Mammary epithelial cell (primary cell): ENCODE measurements at regions of chr7 and their contacts with region 1.

Region 1: DNA sequence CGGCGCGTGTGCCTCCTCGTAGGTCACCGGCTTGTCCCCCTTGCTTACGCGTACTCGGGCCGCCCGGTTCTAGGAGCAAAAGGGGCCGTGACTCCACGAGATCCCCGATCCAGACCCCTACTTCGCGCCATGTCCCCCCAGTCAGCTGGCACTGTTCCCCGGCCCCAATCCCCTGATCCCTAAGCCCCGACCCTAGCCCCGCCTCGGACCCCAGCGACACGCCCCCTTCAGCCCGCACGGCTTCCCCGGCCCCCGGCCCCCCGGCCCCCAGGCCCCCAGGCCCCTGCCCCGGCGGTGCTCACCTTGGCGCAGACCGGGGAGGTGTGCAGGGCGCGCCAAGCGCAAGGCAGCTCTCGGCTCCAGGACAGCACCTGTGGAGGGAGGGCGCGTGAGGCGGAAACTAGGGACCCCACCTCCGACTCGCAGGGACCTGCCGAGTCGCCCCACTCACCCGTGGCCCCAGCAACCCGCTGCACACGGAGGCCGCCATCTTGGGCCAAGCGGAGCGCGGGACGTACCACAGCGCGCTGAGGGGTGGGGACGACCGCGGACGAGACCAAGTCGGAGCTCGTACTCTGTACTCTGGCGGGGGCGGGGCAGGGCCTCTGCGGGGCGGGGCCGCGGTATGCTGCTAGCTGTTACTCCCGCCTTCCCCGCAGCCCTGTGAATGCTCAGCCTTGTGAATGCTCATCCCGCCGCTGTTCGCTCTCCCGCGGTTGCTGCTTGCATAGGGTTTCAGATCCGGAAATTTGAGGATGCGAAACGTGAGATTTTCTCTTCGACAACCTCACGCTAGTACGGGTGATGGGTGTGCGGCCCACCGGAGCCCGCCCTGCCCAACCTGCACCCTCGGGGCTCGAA is at the start of gene MRPS24:
- DNase-seq: peak; percentile 90
- H3K4me3 ChIP-seq: peak within 1 kb of the TSS; percentile 64 to 99 (median 79)
- H3K27ac ChIP-seq: peak within 1 kb of the TSS; percentile 97
- H3K4me1 ChIP-seq: peaks cover 42% of the 10 kb centered on the region
- H3K27me3 ChIP-seq: no peaks in the 10 kb centered on the region
- CTCF ChIP-seq: no peak
- total RNA-seq, gene MRPS24: 49.0 to 114 TPM

Region 2: DNA sequence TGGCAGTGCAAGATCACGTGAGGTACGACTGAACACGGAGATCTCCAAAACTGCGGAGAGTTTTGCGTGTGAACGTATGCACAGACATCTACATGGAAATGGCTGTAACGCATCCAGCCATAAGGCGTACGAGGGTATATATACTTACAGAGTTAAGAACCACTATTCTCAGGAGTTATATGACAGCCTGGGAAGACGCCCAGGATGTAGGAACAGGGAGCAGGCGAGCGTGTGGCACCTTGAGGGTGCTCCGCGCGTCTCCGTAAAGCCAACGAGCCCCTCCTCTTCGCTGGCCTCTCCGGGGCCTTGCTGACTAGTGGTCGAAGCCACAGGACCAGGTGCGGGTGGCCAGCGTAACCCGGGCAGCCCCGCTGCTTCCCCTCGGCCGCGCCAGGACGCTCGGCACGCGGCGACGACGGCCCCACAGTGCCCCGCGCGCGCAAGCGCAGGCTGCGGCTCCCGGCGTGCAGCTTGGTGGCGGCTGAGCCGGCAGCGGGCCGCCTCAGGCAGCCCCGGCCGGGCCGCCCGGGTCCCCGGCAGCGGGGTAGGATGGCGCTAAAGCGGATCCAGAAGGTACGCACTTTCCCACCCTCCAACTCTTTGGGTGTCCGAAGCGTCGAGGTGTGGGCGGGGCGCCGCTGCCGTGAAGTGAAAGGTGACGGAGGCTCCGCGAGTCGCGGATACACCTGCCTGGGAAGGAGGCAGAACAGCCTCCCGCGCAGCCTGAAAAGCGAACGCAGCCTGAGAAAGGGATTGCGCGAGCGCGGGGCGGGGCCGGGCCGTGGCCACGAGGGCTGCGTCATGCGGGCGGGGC is 57.0 kb after region 1 on chr7 and contains the start of gene UBE2D4:
- CTCF ChIA-PET with region 1: no interaction called
- dilution Hi-C with region 1: no loop called
- in situ Hi-C with region 1: no loop called
- intact Hi-C with region 1: loop called (anchors 2 kb)
- DNase-seq: peak; percentile 83
- H3K4me3 ChIP-seq: peak within 1 kb of the TSS; percentile 62 to 73 (median 70)
- H3K27ac ChIP-seq: no peak within 1 kb of the TSS
- H3K4me1 ChIP-seq: peaks cover 9% of the 10 kb centered on the region
- H3K27me3 ChIP-seq: no peaks in the 10 kb centered on the region
- CTCF ChIP-seq: no peak
- total RNA-seq, gene UBE2D4: 3.9 to 7.7 TPM